Activated naive CD4-positive, alpha-beta T cell treated with anti-CD3 and anti-CD28 coated beads for 36 hours (primary cell): ENCODE measurements at regions of chr3 and their contacts with region 1.

Region 1: GRCh38 chr3:88167704-88168103 is 17.9 kb downstream of the C3orf38 start:
- DNase-seq: no peak
- H3K4me3 Mint-ChIP-seq: no peak overlapping the region
- H3K27ac Mint-ChIP-seq: no peak overlapping the region
- H3K4me1 Mint-ChIP-seq: peaks cover 3% of the 10 kb centered on the region
- H3K27me3 Mint-ChIP-seq: no peaks in the 10 kb centered on the region

Region 2: DNA sequence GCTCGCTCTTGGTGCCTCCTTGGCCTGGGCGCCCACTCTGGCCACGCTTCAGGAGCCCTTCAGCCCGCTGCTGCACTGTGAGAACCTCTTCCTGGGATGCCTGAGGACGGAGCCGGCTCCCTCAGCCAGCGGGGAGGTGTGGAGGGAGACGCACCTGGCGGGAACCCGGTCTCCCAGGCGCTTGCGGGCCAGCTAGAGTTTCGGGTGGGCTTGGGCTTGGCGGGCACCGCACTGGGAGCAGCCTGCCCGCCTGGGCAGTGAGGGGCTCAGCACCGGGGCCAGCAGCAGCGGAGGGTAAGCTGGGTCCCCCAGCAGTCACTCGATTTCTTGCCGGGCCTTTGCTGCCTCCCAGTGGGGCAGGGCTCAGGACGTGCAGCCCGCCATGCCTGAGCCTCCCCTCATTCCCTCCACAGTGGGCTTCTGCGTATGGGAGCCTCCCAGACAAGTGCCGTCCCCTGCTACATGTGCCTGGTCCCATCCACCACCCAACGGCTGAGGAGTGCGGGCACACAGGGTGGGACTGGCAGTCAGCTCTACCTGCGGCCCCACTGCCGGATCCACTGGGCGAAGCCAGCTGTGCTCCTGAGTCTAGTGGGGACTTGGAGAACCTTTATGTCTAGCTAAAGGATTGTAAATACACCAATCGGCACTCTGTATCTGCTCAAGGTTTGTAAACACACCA is 1885.5 kb before region 1 on chr3:
- CTCF ChIA-PET with region 1: no interaction called
- intact Hi-C with region 1: no loop called
- DNase-seq: no peak
- H3K4me3 Mint-ChIP-seq: no peak overlapping the region
- H3K27ac Mint-ChIP-seq: no peak overlapping the region
- H3K4me1 Mint-ChIP-seq: no peaks in the 10 kb centered on the region
- H3K27me3 Mint-ChIP-seq: no peaks in the 10 kb centered on the region

Region 3: GRCh38 chr3:87305517-87305916 is 862.2 kb before region 1 on chr3:
- CTCF ChIA-PET with region 1: interaction called, 10 read pairs
- intact Hi-C with region 1: no loop called
- DNase-seq: no peak
- H3K4me3 Mint-ChIP-seq: no peak overlapping the region
- H3K27ac Mint-ChIP-seq: no peak overlapping the region
- H3K4me1 Mint-ChIP-seq: peaks cover 8% of the 10 kb centered on the region
- H3K27me3 Mint-ChIP-seq: peaks cover 2% of the 10 kb centered on the region